A673 (cell line): ENCODE measurements at regions of chr19 and their contacts with region 1.

Region 1: GRCh38 chr19:51926784-51927742 is at the start of gene ZNF613:
- DNase-seq: peak; percentile 94
- H3K4me3 ChIP-seq: peak within 1 kb of the TSS; percentile 84
- H3K27ac ChIP-seq: peak within 1 kb of the TSS; percentile 90
- H3K4me1 ChIP-seq: no peaks in the 10 kb centered on the region
- H3K27me3 ChIP-seq: no peaks in the 10 kb centered on the region
- CTCF ChIP-seq: peak; percentile 42
- total RNA-seq, gene ZNF613: 5.3 and 7.7 TPM in 2 replicates

Region 2: DNA sequence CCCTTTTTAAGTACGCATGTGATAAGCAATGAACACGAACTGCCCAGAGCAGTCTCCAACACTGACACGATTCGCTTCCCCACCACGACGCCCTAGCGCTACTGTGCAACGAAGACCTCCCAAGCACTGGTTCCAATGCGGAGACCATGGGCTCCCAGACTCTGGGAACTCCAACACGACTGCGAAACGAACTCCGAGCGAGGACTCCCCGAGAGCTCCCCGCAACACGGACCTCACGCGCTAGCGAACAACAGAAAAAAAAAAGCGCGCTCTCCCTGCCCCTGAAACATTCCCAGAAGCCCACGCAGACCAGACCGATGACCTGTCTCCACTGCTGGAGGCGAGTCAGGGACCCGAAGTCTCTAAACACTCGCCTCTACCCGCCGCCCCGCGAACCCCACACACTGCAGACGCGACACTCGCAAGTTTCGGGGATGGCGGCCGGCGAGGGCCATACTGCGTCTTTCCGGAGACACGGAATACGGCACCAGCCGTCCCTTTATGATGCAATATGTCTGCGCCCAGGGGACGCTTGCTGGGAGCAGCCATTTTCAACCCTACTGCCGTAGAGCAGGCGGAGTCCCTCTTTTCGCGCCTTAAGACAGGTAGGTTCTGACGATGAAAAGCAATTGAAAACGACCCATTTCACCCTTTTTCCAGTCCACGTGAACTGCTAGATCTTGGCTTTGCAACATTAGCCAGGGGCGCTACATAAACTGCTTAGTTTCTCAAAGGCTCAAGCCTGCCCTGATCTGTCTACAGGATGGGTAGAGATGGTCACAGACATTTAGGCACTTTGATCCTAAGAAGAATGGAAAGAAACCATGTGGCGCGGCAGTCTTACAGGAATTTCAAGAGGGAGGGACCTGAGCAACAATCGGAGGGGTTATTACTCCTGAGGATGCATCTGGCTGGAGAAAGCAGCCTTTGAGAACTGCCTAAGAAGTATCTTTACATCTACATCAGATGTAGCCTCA is 39.3 kb before region 1 on chr19 and contains the start of gene ZNF577:
- CTCF ChIA-PET with region 1: no interaction called
- POLR2A ChIA-PET with region 1: no interaction called
- intact Hi-C with region 1: loop called (anchors 2 kb)
- DNase-seq: peak; percentile 96
- H3K4me3 ChIP-seq: peak within 1 kb of the TSS; percentile 60
- H3K27ac ChIP-seq: peak within 1 kb of the TSS; percentile 76
- H3K4me1 ChIP-seq: no peaks in the 10 kb centered on the region
- H3K27me3 ChIP-seq: no peaks in the 10 kb centered on the region
- CTCF ChIP-seq: no peak
- total RNA-seq, gene ZNF577: 7.0 and 7.3 TPM in 2 replicates